ENCODE measurements at regions of chr2 and their contacts with region 1.

Region 1: GRCh38 chr2:215949991-215950404 is 63.4 kb downstream of the MREG start:
- DNase-seq: no peak
- H3K4me3 Mint-ChIP-seq: no peak overlapping the region
- H3K27ac Mint-ChIP-seq: no peak overlapping the region
- H3K4me1 Mint-ChIP-seq: peaks cover 9% of the 10 kb centered on the region
- H3K27me3 Mint-ChIP-seq: no peaks in the 10 kb centered on the region

Region 2: DNA sequence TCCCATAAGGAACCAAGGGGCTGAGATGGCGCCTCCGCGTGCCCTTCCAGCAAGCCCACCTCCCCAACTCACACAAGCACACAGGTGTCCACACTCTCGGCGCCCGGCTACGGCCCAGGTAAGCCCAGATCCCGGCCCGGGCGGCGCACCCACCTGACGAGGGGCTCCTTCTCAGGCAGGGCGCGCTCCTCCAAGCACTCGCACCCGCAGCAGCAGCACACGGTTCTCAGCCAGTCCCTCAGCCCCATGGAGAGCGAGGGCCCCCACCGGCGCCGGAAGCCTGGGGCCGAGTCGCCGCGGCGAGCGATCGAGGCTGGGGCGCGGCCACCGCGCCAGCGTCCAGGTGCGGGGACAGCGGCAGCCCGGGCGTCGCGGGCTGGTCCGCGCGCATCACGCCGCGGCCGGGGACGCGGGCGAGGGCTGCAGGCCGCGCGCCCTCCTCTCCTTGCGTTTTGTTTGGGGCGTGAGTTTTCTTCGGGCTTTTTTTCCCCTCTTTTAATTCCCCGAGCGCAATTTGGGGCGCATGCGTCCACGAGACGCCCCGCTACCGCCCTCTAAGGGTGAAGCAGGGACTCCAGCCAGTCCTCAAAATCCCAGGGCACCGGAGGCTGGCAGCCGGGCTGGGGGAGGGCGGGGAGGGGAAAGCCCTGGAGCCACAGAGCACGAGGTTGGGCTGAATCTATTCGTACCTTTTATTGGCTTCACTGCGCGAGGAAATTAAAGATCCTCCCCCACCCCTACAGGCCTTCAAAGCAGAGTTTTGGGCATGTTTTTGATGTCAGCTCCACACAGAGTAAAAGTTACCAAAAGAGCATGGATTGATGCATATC is 63.3 kb after region 1 on chr2 and contains the start of gene MREG:
- intact Hi-C with region 1: loop called (anchors 2 kb)
- DNase-seq: peak; percentile 79
- H3K4me3 Mint-ChIP-seq: peak within 1 kb of the TSS; percentile 90
- H3K27ac Mint-ChIP-seq: peak within 1 kb of the TSS; percentile 62
- H3K4me1 Mint-ChIP-seq: peaks cover 51% of the 10 kb centered on the region
- H3K27me3 Mint-ChIP-seq: no peaks in the 10 kb centered on the region
- total RNA-seq, gene MREG: 15.3 and 15.7 TPM in 2 replicates

Region 3: GRCh38 chr2:216023055-216023648 is 73.2 kb after region 1 on chr2:
- intact Hi-C with region 1: loop called (anchors 1 kb)
- DNase-seq: no peak
- H3K4me3 Mint-ChIP-seq: no peak overlapping the region
- H3K27ac Mint-ChIP-seq: no peak overlapping the region
- H3K4me1 Mint-ChIP-seq: peaks cover 6% of the 10 kb centered on the region
- H3K27me3 Mint-ChIP-seq: no peaks in the 10 kb centered on the region

Region 4: DNA sequence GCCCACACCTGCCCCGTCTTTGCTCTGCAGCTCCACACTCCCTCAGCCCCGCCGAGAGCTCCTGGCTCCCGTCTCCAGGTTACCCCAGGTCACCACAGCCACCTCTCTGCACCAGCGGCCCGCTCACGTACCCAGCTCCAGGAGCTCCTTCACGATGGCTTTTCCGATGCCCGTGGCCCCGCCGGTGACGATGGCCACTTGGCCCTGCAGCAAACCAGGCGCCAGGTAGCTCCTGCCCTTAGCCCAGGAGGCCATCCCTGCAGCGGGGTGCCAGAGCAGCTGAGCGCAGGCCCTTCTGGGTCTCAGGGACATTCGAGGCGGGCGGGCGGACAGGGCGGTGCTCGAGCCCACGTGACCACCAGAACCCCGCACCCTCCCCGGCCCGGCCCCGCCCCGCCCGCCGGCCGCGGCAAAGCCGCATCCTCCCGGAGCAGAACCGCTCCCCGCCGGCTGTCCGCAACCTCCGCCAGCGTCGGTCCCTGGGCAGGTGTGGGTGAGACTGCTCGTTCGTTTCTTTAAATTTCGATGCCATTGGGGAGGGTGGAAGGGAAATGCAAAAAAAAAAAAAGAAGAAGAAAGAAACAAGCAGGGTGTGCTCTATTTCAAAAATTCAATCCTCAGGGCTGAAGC is 131.6 kb after region 1 on chr2 and contains the starts of genes PECR and TMEM169:
- intact Hi-C with region 1: no loop called
- DNase-seq: peak; percentile 73
- H3K4me3 Mint-ChIP-seq: peak within 1 kb of the TSS; percentile 92
- H3K27ac Mint-ChIP-seq: peak within 1 kb of the TSS; percentile 81
- H3K4me1 Mint-ChIP-seq: peaks cover 46% of the 10 kb centered on the region
- H3K27me3 Mint-ChIP-seq: no peaks in the 10 kb centered on the region
- total RNA-seq, gene PECR: 11.5 and 15.2 TPM in 2 replicates
- total RNA-seq, gene TMEM169: 1.3 and 1.6 TPM in 2 replicates